Activated T-helper 1 cell treated with anti-CD3 and anti-CD28 coated beads, Interleukin-12 subunit alpha, Interleukin-12 subunit beta, Interleukin-2, Interleukin-4 antibody, amounts not matched to agents 30 ng/mL and 10 ng/mL and 1 ng/mL, durations not matched to agents 14 hours and 24 hours and 36 hours (primary cell): ENCODE measurements at regions of chr4 and their contacts with region 1.

Region 1: DNA sequence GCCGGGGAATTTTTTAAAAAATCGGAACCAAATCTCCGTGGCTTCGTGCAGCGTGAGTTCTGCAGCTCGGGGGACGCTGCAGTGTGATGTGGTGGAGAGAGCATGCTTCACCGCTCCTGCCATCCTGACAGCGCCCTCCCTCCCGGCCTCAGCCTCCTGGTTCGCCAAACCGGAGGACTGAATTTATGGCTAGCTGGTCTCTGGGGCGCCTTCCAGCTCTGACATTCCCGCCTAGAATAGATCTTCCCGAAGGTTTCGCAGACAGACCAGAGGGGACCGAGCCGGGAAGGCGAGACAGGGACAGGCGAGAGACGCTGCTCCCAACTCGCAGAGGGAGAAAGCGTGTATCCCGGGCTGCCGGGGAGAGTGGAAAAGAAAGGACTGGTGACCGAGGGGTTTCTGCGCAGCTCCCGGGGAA is 25.9 kb downstream of the HOPX start:
- DNase-seq: no peak
- H3K4me3 Mint-ChIP-seq: peak overlapping the region; percentile 87
- H3K27ac Mint-ChIP-seq: peak overlapping the region; percentile 85
- H3K4me1 Mint-ChIP-seq: peaks cover 68% of the 10 kb centered on the region
- H3K27me3 Mint-ChIP-seq: peaks cover 23% of the 10 kb centered on the region

Region 2: DNA sequence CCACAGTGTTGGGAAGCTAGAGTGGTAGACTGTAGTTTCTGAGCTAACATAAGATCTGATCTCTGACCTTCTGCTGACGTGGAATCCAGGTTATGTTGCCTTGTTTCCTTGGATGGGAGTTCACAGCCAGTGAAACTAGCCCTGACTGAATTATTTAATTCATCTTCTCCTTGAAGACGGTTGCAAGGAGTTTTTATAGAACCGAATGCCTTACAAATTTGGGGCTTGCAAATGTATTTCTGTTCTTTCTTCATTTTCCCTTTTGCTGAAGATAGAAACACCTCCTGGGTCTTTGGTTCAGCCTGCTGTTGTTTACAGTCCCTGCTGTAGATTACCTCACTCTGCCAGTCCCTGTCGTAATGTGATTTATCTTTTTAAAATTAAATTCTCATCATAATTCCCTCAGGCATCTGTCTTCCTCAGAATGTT is 592.6 kb before region 1 on chr4:
- intact Hi-C with region 1: no loop called
- DNase-seq: no peak
- H3K4me3 Mint-ChIP-seq: no peak overlapping the region
- H3K27ac Mint-ChIP-seq: no peak overlapping the region
- H3K4me1 Mint-ChIP-seq: no peaks in the 10 kb centered on the region
- H3K27me3 Mint-ChIP-seq: peaks cover 10% of the 10 kb centered on the region

Region 3: DNA sequence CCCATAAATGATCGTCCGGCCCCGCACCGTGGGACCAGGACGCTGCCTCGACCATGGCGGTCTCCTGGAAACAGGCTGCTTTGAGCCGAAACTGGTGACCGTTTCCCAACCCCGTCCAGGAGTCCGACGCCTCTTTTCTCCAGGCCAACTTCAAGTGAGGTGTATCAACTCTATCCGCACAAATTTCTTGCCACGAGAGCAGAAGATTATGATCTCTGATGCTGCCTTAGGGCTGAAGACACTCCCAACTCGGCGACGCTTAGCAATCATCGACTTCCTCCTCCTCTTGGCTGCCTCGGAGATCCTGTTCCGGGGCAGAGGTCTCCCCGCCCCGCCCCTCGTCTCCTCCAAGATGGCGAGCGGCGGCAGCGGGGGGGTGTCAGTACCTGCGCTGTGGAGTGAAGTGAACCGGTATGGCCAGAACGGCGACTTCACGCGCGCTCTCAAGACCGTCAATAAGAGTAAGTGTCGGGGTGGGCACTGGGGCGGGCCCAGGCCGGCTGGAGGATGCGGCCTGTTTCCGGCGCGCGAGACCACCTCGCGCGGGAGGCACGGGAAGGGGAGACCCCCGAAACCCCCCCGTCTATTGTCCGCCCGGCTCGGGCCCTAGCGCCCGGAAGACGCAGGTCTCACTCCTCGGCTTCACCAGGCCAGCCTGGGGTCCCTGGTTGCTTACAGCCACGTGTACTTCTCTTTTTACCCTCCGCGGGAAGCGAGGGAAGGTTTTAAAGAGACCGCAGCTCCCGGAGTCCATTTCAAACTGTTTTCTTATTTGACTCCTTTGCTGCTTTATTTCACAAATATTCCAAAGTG is 187.7 kb before region 1 on chr4 and contains the start of gene SRP72:
- intact Hi-C with region 1: loop called (anchors 2 kb)
- DNase-seq: peak; percentile 88
- H3K4me3 Mint-ChIP-seq: peak within 1 kb of the TSS; percentile 98
- H3K27ac Mint-ChIP-seq: peak within 1 kb of the TSS; percentile 99
- H3K4me1 Mint-ChIP-seq: peaks cover 60% of the 10 kb centered on the region
- H3K27me3 Mint-ChIP-seq: no peaks in the 10 kb centered on the region
- total RNA-seq, gene SRP72: 199 and 211 TPM in 2 replicates

Region 4: DNA sequence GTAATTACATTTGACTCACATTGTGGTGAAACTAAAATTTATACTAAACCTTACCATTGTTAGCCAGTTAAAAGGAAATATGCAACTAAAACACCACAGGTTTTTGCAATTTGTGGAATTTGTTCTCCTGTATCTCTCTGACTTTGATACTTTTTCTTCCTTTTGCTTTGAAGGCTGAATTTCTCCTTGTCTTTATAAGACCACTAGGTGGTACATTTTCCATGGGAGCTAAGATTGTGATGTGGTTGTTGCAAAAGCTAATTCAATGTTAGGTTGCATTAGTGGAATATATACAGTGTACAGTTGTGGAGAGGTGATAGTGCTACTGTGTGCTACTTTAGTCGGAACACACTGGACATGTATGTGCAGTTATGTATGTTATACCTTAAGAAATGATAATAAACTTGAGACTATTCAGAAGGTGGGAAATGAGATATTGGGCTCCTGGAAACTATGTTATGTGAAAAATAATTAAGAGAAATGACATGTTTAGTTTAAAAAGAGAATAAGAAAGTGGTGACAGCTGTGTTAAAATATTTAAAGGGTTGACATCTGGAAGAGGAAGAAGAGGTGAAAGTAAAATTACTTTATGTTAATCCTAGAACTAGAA is 79.3 kb before region 1 on chr4:
- intact Hi-C with region 1: loop called (anchors 5 kb)
- DNase-seq: no peak
- H3K4me3 Mint-ChIP-seq: no peak overlapping the region
- H3K27ac Mint-ChIP-seq: no peak overlapping the region
- H3K4me1 Mint-ChIP-seq: no peaks in the 10 kb centered on the region
- H3K27me3 Mint-ChIP-seq: peaks cover 11% of the 10 kb centered on the region

Region 5: DNA sequence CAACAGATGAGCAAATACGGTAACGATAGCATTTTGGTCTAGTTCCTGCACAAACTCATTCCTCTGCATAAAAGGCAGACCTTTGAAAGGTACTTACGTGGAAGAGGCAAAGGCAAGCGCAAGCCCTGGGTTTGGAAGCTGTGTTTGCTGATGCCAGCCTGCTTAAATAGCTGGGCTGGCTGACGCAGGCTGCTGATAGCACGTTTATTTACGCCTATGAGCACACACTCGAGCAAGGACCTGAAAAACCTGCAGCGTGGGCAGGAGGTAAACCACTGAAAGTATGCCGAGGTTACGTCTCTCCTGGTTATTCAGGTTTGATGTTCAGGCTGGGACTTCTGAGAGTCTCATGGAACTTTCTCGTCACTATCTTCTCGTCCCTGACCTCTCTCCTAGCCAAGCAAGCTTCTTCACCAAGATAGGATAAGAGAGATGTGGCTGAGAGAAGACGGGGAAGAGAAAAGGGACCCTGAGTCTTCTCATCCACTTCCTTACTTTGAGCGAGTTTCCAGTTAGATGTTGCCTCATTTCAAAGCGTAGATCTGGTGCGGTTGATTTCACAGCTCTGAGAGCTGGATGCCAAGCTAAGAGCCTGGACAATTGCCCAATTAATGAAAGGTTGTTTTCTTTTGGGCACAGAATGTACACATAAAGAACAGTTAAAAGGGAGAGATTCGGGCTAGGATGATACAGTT is 26.1 kb after region 1 on chr4 and contains the start of gene HOPX:
- intact Hi-C with region 1: loop called (anchors 1 kb)
- DNase-seq: peak; percentile 20
- H3K4me3 Mint-ChIP-seq: peak within 1 kb of the TSS; percentile 57
- H3K27ac Mint-ChIP-seq: peak within 1 kb of the TSS; percentile 5
- H3K4me1 Mint-ChIP-seq: peaks cover 41% of the 10 kb centered on the region
- H3K27me3 Mint-ChIP-seq: peaks cover 65% of the 10 kb centered on the region
- total RNA-seq, gene HOPX: 121 and 128 TPM in 2 replicates

Region 6: GRCh38 chr4:56708146-56708545 is 52.9 kb after region 1 on chr4:
- intact Hi-C with region 1: no loop called
- DNase-seq: no peak
- H3K4me3 Mint-ChIP-seq: no peak overlapping the region
- H3K27ac Mint-ChIP-seq: no peak overlapping the region
- H3K4me1 Mint-ChIP-seq: no peaks in the 10 kb centered on the region
- H3K27me3 Mint-ChIP-seq: peaks cover 3% of the 10 kb centered on the region

Region 7: DNA sequence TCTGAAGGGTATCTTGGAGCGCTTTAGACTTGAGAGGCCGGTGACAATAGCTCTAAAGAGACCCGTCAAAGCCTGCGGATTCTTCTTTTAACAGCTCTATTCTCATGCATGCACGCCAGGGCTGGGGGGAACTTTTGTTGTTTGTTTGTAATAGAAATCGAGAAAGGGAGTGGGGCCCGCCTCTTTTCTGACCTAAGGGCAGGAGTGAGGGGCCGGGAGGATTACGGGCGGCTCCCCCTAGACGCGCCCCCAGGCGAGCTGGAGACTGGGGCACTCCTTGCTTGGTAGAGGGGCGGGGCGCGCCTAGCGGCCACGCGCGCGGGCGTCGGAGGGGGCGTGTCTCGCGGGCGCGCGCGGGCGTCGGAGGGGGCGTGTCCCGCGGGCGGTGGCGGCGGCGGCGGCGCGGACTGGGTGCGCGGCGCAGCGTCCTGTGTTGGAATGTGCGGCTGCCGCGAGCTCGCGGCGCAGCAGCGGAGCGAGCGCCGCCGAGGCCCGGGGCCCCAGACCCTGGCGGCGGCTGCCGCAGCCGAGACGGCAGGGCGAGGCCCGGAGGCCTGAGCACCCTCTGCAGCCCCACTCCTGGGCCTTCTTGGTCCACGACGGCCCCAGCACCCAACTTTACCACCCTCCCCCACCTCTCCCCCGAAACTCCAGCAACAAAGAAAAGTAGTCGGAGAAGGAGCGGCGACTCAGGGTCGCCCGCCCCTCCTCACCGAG is 252.4 kb after region 1 on chr4 and contains the start of gene REST:
- intact Hi-C with region 1: loop called (anchors 5 kb)
- DNase-seq: peak; percentile 81
- H3K4me3 Mint-ChIP-seq: peak within 1 kb of the TSS; percentile 84
- H3K27ac Mint-ChIP-seq: peak within 1 kb of the TSS; percentile 78
- H3K4me1 Mint-ChIP-seq: peaks cover 41% of the 10 kb centered on the region
- H3K27me3 Mint-ChIP-seq: peaks cover 10% of the 10 kb centered on the region
- total RNA-seq, gene REST: 52.4 and 60.0 TPM in 2 replicates